Activated naive CD4-positive, alpha-beta T cell treated with anti-CD3 and anti-CD28 coated beads for 36 hours (primary cell): ENCODE measurements at regions of chr10 and their contacts with region 1.

Region 1: DNA sequence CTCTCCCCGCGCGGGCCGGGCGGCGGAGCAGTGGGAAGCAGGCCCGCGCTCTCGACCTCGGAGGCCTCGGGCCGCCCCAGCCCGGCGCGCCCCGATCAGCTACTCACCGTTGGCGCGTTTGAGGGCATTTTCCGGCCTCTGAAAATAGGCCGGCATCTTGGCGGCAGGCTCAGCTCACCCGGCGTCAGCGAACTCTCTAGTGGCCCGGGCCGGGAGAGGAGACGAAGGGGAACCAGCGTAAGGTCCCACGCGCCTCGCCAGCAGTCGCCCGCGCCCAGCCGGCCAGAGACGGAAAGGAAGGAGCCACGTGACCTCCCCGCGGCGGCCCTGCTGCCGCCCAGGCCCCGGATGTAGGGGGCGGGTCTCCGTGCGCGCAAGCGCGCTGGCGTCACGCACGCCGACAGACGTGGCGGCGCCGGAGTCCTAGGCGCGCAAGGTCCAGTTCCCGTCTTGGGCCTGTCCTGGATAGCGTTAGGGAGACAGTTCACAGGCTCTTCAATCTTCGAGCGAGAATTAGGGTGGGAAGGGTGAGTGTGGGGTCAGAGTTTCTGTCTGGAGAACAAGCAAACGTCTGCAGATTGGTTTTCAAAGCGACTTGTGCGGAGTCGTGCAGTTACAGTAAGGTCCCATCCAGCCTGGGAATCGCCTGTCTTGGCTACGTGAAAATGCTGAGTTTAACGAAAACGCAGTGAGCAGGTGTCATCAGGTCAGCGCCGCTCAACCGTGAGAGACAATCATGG is at the start of gene EIF3A:
- DNase-seq: peak; percentile 90
- H3K4me3 Mint-ChIP-seq: peak within 1 kb of the TSS; percentile 95
- H3K27ac Mint-ChIP-seq: peak within 1 kb of the TSS; percentile 98
- H3K4me1 Mint-ChIP-seq: peaks cover 33% of the 10 kb centered on the region
- H3K27me3 Mint-ChIP-seq: no peaks in the 10 kb centered on the region
- total RNA-seq, gene EIF3A: 113 to 120 TPM

Region 2: GRCh38 chr10:118220346-118220850 is 860.3 kb before region 1 on chr10:
- CTCF ChIA-PET with region 1: no interaction called
- intact Hi-C with region 1: no loop called
- DNase-seq: no peak
- H3K4me3 Mint-ChIP-seq: no peak overlapping the region
- H3K27ac Mint-ChIP-seq: no peak overlapping the region
- H3K4me1 Mint-ChIP-seq: no peaks in the 10 kb centered on the region
- H3K27me3 Mint-ChIP-seq: peaks cover 18% of the 10 kb centered on the region

Region 3: GRCh38 chr10:119028900-119029612 is 51.6 kb before region 1 on chr10:
- CTCF ChIA-PET with region 1: no interaction called
- intact Hi-C with region 1: loop called (anchors 1 kb)
- DNase-seq: peak; percentile 73
- H3K4me3 Mint-ChIP-seq: peak overlapping the region; percentile 66
- H3K27ac Mint-ChIP-seq: no peak overlapping the region
- H3K4me1 Mint-ChIP-seq: peaks cover 16% of the 10 kb centered on the region
- H3K27me3 Mint-ChIP-seq: peaks cover 4% of the 10 kb centered on the region

Region 4: DNA sequence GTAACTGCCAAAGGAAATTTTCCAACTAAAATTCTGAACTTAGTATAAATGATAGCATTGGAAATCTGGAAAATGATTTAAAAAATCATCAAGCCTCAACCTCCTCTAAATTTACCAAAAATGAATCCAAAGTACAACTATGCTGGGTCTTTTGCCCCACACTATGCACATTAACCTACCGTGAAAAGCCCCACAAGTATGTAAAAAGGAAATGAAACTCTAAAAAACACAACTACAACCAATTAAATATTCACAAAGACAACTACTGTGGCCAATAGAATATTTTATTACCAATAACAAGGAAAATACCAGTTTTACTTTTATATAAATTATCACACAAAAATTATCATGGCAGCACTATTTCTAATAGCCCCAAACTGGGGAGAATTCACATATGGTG is 19.3 kb before region 1 on chr10:
- CTCF ChIA-PET with region 1: no interaction called
- intact Hi-C with region 1: no loop called
- DNase-seq: no peak
- H3K4me3 Mint-ChIP-seq: no peak overlapping the region
- H3K27ac Mint-ChIP-seq: no peak overlapping the region
- H3K4me1 Mint-ChIP-seq: peaks cover 13% of the 10 kb centered on the region
- H3K27me3 Mint-ChIP-seq: no peaks in the 10 kb centered on the region